ENCODE measurements at regions of chr9 and their contacts with region 1.

Region 1: GRCh38 chr9:98848450-98849149 is 41.1 kb downstream of the GALNT12 start:
- DNase-seq: peak; percentile 74
- ATAC-seq: peak; percentile 91
- H3K4me3 ChIP-seq: no peak overlapping the region
- H3K4me3 Mint-ChIP-seq: no peak overlapping the region
- H3K27ac ChIP-seq: no peak overlapping the region
- H3K27ac Mint-ChIP-seq: no peak overlapping the region
- H3K4me1 ChIP-seq: no peaks in the 10 kb centered on the region
- H3K4me1 Mint-ChIP-seq: no peaks in the 10 kb centered on the region
- H3K27me3 ChIP-seq: no peaks in the 10 kb centered on the region
- H3K27me3 Mint-ChIP-seq: no peaks in the 10 kb centered on the region
- CTCF ChIP-seq: peak; percentile 97

Region 2: DNA sequence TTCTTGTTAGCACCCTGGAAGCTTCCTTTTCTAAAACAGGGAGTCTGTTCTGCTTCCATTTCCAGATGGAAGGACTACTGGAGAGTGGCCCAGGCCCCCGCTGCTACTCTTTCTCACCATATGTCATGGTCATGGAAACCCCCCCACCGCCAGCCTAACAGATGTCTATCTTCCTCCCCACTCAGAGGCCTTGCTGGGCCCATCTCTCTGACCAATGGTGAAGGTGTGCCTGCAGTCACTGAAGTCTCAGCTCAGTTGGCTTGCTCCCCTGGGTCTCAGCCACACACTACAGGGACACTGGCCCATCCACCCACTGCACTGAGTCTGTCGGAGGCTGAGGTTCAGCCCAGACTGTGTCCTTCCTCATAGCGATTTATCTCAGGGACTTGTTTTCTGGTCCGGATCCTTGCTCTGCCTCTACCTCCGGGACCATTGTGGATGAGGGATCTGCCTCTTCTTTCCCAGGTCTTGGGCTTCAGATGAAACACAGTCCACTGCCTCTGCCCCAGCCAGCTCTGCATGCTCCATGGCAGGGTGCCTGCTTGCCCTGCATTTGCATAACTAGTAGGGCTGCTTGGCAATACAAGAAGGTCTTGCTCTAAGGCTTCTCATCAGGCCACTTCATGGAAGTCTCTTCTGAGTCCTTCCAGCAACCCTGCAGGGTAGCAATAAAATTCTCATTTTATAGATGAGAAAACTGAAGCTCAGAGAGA is 10.3 kb before region 1 on chr9:
- CTCF ChIA-PET with region 1: interaction called, 38 read pairs
- POLR2A ChIA-PET with region 1: no interaction called
- intact Hi-C with region 1: no loop called
- DNase-seq: no peak
- ATAC-seq: no peak
- H3K4me3 ChIP-seq: no peak overlapping the region
- H3K4me3 Mint-ChIP-seq: no peak overlapping the region
- H3K27ac ChIP-seq: no peak overlapping the region
- H3K27ac Mint-ChIP-seq: no peak overlapping the region
- H3K4me1 ChIP-seq: no peaks in the 10 kb centered on the region
- H3K4me1 Mint-ChIP-seq: no peaks in the 10 kb centered on the region
- H3K27me3 ChIP-seq: no peaks in the 10 kb centered on the region
- H3K27me3 Mint-ChIP-seq: no peaks in the 10 kb centered on the region
- CTCF ChIP-seq: no peak

Region 3: GRCh38 chr9:98860871-98861293 is 12.3 kb after region 1 on chr9:
- CTCF ChIA-PET with region 1: interaction called, 20 read pairs
- POLR2A ChIA-PET with region 1: no interaction called
- intact Hi-C with region 1: no loop called
- DNase-seq: no peak
- ATAC-seq: no peak
- H3K4me3 ChIP-seq: no peak overlapping the region
- H3K4me3 Mint-ChIP-seq: no peak overlapping the region
- H3K27ac ChIP-seq: no peak overlapping the region
- H3K27ac Mint-ChIP-seq: no peak overlapping the region
- H3K4me1 ChIP-seq: no peaks in the 10 kb centered on the region
- H3K4me1 Mint-ChIP-seq: no peaks in the 10 kb centered on the region
- H3K27me3 ChIP-seq: no peaks in the 10 kb centered on the region
- H3K27me3 Mint-ChIP-seq: peaks cover 32% of the 10 kb centered on the region
- CTCF ChIP-seq: no peak

Measured in B cell (primary cell).